A549 (cell line): ENCODE measurements at regions of chr5 and their contacts with region 1.

Region 1: DNA sequence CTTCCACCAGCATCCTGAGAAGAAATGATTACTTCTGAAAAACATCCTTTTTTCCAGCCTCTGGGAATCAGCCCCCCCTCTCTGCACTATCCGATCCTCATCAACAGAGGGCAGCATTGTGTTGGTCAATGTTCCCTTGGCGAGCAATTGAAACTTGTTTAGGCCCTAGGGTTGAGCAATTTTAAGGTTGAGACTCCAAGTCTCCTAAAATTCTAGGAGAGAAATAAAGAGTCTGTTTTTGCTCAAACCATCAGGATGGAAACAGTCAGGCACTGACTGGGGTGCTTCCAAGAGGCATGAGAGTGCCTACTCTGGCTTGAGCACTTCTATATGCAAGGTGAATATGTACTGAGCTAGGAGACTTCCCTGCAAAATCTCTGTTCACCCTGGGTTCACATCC is 12.4 kb upstream of the CYFIP2 start:
- DNase-seq: peak; percentile 45 to 69
- ATAC-seq: peak; percentile 66 to 92; a peak in 5 of 6 replicates
- H3K4me3 ChIP-seq: no peak overlapping the region
- H3K27ac ChIP-seq: no peak overlapping the region
- H3K4me1 ChIP-seq: no peaks in the 10 kb centered on the region
- CTCF ChIP-seq: peak; percentile 81
- EP300 ChIP-seq: no peak
- POLR2A ChIP-seq: no peak
- RAD21 ChIP-seq: peak; percentile 85 to 89

Region 2: DNA sequence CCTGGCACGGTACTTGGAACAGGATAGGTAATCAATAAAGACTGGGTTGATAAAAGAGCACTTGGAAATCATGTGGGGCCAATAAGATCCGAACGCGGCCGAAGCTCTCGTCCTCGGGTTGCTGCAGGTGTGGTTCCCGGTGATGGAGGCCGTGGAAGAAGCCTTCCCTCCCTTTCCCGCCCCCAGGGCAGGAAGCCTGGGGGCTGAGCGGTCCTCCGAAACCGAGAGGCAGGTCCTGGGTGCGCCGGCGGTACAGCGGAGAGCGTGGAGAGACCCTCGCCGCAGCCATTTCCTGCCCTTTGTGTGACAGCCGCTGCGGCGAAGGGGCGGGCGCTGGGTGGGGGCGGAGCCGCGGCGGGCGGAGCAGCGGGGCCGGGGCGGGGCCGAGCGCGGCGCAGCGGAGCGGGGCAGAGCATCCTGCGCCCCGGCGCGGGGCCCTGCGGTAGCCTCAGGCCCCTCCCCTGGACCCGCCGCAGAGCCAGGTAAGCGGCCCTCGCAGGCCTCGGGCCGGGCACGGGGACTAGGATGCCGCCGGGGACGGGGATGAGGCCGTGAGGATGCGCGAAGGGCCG is 12.3 kb after region 1 on chr5 and contains the start of gene CYFIP2:
- CTCF ChIA-PET with region 1: interaction called, 49 read pairs
- POLR2A ChIA-PET with region 1: no interaction called
- DNase-seq: peak; percentile 19 to 71
- ATAC-seq: peak; percentile 95 to 96
- H3K4me3 ChIP-seq: peak within 1 kb of the TSS; percentile 90
- H3K27ac ChIP-seq: peak within 1 kb of the TSS; percentile 75 to 92
- H3K4me1 ChIP-seq: peaks cover 25% of the 10 kb centered on the region
- CTCF ChIP-seq: no peak
- EP300 ChIP-seq: no peak
- POLR2A ChIP-seq: no peak
- RAD21 ChIP-seq: no peak
- polyA plus RNA-seq, gene CYFIP2: 9.0 and 25.4 TPM in 2 replicates

Region 3: DNA sequence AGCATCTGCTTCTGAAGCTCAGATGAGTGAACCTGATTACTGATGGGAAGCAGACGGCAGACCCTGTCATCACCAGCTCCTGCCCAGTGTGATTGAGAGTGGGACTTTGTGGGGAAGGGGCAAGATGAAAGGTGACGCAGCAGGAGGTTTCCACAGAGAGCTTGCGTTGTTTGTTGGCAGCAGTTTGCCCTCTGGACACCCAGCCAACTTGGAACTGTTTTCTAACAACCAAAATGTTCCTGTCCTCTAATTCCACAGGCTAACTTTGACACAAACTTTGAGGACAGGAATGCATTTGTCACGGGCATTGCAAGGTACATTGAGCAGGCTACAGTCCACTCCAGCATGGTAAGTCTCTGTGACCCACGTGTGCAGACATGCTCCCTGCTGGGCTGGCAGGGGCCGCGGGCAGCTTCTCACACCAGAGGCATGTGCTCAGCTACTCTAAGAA is 33.2 kb after region 1 on chr5:
- CTCF ChIA-PET with region 1: interaction called, 17 read pairs
- POLR2A ChIA-PET with region 1: no interaction called
- DNase-seq: no peak
- ATAC-seq: no peak
- H3K4me3 ChIP-seq: no peak overlapping the region
- H3K27ac ChIP-seq: no peak overlapping the region
- H3K4me1 ChIP-seq: peaks cover 27% of the 10 kb centered on the region
- CTCF ChIP-seq: no peak
- EP300 ChIP-seq: no peak
- POLR2A ChIP-seq: no peak
- RAD21 ChIP-seq: no peak

Region 4: GRCh38 chr5:157295247-157295646 is 41.7 kb after region 1 on chr5:
- CTCF ChIA-PET with region 1: interaction called, 28 read pairs
- POLR2A ChIA-PET with region 1: no interaction called
- DNase-seq: no peak
- ATAC-seq: no peak
- H3K4me3 ChIP-seq: no peak overlapping the region
- H3K27ac ChIP-seq: no peak overlapping the region
- H3K4me1 ChIP-seq: peaks cover 18% of the 10 kb centered on the region
- CTCF ChIP-seq: no peak
- EP300 ChIP-seq: no peak
- POLR2A ChIP-seq: no peak
- RAD21 ChIP-seq: no peak

Region 5: GRCh38 chr5:157303667-157304327 is 50.2 kb after region 1 on chr5:
- CTCF ChIA-PET with region 1: interaction called, 28 read pairs
- POLR2A ChIA-PET with region 1: no interaction called
- DNase-seq: peak in 1 of 2 experiments; percentile 17
- ATAC-seq: peak; percentile 26 to 75; a peak in 4 of 6 replicates
- H3K4me3 ChIP-seq: no peak overlapping the region
- H3K27ac ChIP-seq: no peak overlapping the region
- H3K4me1 ChIP-seq: no peaks in the 10 kb centered on the region
- CTCF ChIP-seq: no peak
- EP300 ChIP-seq: no peak
- POLR2A ChIP-seq: no peak
- RAD21 ChIP-seq: no peak

Region 6: GRCh38 chr5:157312492-157312891 is 58.9 kb after region 1 on chr5:
- CTCF ChIA-PET with region 1: interaction called, 52 read pairs
- POLR2A ChIA-PET with region 1: no interaction called
- DNase-seq: peak; percentile 63 to 87
- ATAC-seq: peak; percentile 88 to 97
- H3K4me3 ChIP-seq: no peak overlapping the region
- H3K27ac ChIP-seq: no peak overlapping the region
- H3K4me1 ChIP-seq: no peaks in the 10 kb centered on the region
- CTCF ChIP-seq: peak; percentile 84
- EP300 ChIP-seq: no peak
- POLR2A ChIP-seq: no peak
- RAD21 ChIP-seq: peak; percentile 66 to 74